ENCODE measurements at regions of chr17 and their contacts with region 1.

Region 1: GRCh38 chr17:56806949-56807348 is 26.8 kb downstream of the C17orf67 start:
- DNase-seq: no peak
- H3K4me3 Mint-ChIP-seq: no peak overlapping the region
- H3K27ac Mint-ChIP-seq: no peak overlapping the region
- H3K4me1 Mint-ChIP-seq: no peaks in the 10 kb centered on the region
- H3K27me3 Mint-ChIP-seq: no peaks in the 10 kb centered on the region

Region 2: DNA sequence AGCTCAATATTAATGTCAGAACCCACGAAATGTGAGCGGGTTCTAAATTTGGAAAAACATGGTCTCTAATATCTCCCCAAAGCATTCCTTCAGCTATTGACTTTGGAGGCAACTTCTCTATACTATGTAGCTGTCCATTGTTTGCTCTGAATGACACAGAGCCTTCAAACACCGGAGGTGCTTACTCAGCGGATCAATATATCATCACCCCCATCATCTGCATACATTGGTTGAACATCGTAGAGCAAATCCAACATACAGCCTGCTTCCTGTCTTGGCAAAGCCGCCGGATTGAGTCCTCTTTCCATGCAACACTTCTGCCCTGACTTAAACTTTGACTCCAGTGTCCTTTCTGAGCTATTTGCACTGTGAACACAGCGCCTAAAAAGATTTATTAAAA is 34.5 kb before region 1 on chr17:
- intact Hi-C with region 1: loop called (anchors 1 kb)
- DNase-seq: no peak
- H3K4me3 Mint-ChIP-seq: no peak overlapping the region
- H3K27ac Mint-ChIP-seq: no peak overlapping the region
- H3K4me1 Mint-ChIP-seq: no peaks in the 10 kb centered on the region
- H3K27me3 Mint-ChIP-seq: no peaks in the 10 kb centered on the region

Region 3: GRCh38 chr17:56819431-56820145 is 12.6 kb after region 1 on chr17:
- intact Hi-C with region 1: no loop called
- DNase-seq: peak; percentile 62
- H3K4me3 Mint-ChIP-seq: no peak overlapping the region
- H3K27ac Mint-ChIP-seq: no peak overlapping the region
- H3K4me1 Mint-ChIP-seq: peaks cover 7% of the 10 kb centered on the region
- H3K27me3 Mint-ChIP-seq: peaks cover 6% of the 10 kb centered on the region

Region 4: GRCh38 chr17:56845934-56846333 is 39.0 kb after region 1 on chr17:
- intact Hi-C with region 1: no loop called
- DNase-seq: no peak
- H3K4me3 Mint-ChIP-seq: no peak overlapping the region
- H3K27ac Mint-ChIP-seq: no peak overlapping the region
- H3K4me1 Mint-ChIP-seq: peaks cover 3% of the 10 kb centered on the region
- H3K27me3 Mint-ChIP-seq: no peaks in the 10 kb centered on the region

Region 5: DNA sequence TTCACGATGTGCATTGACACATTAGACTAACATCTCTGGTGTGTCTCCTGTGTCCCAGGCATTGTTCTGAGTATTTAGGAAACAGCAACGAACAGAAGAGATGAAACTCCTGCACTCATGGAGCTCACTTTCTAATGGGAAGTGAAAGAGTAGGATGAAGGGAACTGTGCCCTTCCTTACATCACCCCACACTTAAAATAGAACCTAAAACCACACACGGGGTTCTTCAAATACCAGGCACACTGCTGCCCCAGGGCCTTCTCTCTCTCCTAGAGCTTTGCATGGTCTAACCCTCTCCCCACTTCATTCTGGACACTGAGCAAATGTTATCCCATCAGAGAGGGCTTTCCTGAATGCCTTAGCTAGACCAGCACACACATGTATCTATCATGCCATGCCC is 73.2 kb after region 1 on chr17:
- intact Hi-C with region 1: no loop called
- DNase-seq: no peak
- H3K4me3 Mint-ChIP-seq: no peak overlapping the region
- H3K27ac Mint-ChIP-seq: no peak overlapping the region
- H3K4me1 Mint-ChIP-seq: peaks cover 2% of the 10 kb centered on the region
- H3K27me3 Mint-ChIP-seq: peaks cover 4% of the 10 kb centered on the region

Measured in activated T-helper 1 cell treated with anti-CD3 and anti-CD28 coated beads, Interleukin-12 subunit alpha, Interleukin-12 subunit beta, Interleukin-2, Interleukin-4 antibody, amounts not matched to agents 30 ng/mL and 10 ng/mL and 1 ng/mL, durations not matched to agents 14 hours and 24 hours and 36 hours (primary cell).